ENCODE measurements at regions of chr3 and their contacts with region 1.

Region 1: DNA sequence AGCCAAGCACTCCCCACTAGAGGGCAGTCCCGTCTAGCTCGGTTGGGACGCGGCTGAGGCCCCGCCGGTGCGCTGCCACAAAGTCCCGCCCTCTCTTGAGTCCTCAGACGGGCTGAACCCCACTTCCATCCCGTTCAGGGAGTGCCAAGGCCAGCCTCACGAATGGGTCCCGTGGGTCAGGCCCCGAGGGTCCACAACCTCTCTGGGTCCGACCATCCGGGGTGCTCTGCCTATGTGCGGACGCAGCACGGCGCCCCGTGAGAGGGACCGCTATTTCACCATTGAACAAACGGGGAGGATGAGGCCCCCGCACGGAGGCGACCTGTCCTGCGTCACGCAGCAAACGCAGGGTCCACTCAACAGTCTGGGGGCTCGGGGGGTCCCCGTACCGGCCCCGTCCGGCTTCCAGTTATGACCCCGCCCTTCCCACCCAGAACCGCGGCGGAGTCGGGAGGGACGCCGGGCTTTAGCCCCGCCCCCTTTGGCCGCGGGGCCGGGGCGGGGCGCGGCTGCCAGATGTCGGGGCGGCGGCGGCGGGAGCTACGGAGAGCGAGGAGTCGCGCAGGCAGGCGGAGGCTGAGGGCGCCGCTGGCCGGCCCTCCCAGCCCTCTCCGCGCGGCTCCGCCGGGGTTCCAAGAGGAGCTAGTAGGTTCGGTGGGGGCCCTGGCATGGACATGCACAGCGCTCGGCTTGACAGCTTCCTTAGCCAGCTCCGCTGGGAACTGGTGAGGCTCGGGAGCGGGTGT is at the start of gene INKA1:
- DNase-seq: peak; percentile 94
- ATAC-seq: peak; percentile 63
- H3K4me3 ChIP-seq: peak within 1 kb of the TSS; percentile 73 to 99 (median 95)
- H3K4me3 Mint-ChIP-seq: peak within 1 kb of the TSS; percentile 86
- H3K27ac ChIP-seq: peak within 1 kb of the TSS; percentile 91 to 97
- H3K27ac Mint-ChIP-seq: peak within 1 kb of the TSS; percentile 98
- H3K4me1 ChIP-seq: peaks cover 42 to 47% of the 10 kb centered on the region in 2 donors
- H3K4me1 Mint-ChIP-seq: peaks cover 52% of the 10 kb centered on the region
- H3K27me3 ChIP-seq: peaks cover 0 to 3% (median 0%) of the 10 kb centered on the region in 4 experiments
- H3K27me3 Mint-ChIP-seq: peaks cover 5% of the 10 kb centered on the region
- CTCF ChIP-seq: peak; percentile 84
- total RNA-seq, gene INKA1: 25.8 and 28.2 TPM in 2 replicates

Region 2: GRCh38 chr3:49703443-49703927 is 99.4 kb before region 1 on chr3:
- CTCF ChIA-PET with region 1: interaction called, 7 read pairs
- POLR2A ChIA-PET with region 1: no interaction called
- intact Hi-C with region 1: loop called (anchors 1 kb)
- DNase-seq: peak; percentile 81
- ATAC-seq: peak; percentile 99
- H3K4me3 ChIP-seq: no peak overlapping the region
- H3K4me3 Mint-ChIP-seq: no peak overlapping the region
- H3K27ac ChIP-seq: no peak overlapping the region
- H3K27ac Mint-ChIP-seq: peak overlapping the region; percentile 59
- H3K4me1 ChIP-seq: no peaks in the 10 kb centered on the region
- H3K4me1 Mint-ChIP-seq: peaks cover 6% of the 10 kb centered on the region
- H3K27me3 ChIP-seq: no peaks in the 10 kb centered on the region
- H3K27me3 Mint-ChIP-seq: no peaks in the 10 kb centered on the region
- CTCF ChIP-seq: peak; percentile 87

Region 3: DNA sequence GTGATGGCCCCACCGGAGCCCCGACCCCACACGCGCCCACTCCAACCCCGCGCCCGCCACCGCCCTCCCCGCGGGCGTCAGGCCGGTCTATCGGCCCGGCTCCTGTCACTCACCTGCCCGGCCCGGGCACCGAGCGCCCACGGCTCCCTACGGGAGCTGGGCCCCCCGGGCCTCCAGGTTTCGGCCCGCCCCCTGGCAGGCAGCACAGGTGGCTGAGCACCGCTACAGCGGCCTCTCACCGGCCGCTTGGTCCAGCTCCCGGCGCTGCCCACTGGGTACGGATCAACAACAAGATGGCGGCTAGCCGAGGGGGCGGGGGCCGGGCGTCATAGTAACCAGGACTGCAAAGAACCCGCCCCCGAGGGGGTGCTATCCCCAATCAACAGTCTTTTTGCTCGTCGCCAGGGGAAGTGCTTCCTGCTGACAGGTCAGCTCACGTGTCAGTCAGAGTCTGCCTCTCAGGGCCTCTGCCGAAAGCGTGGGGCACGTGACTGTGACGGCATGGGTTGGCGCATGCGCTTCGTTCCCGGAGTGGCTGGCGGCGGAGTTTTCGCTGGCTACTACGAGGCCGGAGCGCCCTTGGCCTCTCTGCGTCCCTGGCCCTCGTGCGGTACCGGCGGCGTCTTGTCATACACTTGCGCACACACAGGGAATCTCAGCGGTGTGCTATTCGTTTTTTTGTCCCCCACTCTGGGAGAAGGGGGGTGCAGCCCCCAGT is 16.5 kb before region 1 on chr3 and contains the start of gene IP6K1:
- CTCF ChIA-PET with region 1: interaction called, 15 read pairs
- POLR2A ChIA-PET with region 1: interaction called, 13 read pairs
- intact Hi-C with region 1: loop called (anchors 1 kb)
- DNase-seq: peak; percentile 99
- ATAC-seq: peak; percentile 99
- H3K4me3 ChIP-seq: peak within 1 kb of the TSS; percentile 69 to 98 (median 88)
- H3K4me3 Mint-ChIP-seq: peak within 1 kb of the TSS; percentile 97
- H3K27ac ChIP-seq: peak within 1 kb of the TSS; percentile 94 to 95
- H3K27ac Mint-ChIP-seq: peak within 1 kb of the TSS; percentile 99
- H3K4me1 ChIP-seq: peaks cover 17 to 34% of the 10 kb centered on the region in 2 donors
- H3K4me1 Mint-ChIP-seq: peaks cover 26% of the 10 kb centered on the region
- H3K27me3 ChIP-seq: no peaks in the 10 kb centered on the region
- H3K27me3 Mint-ChIP-seq: no peaks in the 10 kb centered on the region
- CTCF ChIP-seq: no peak
- total RNA-seq, gene IP6K1: 73.1 and 77.8 TPM in 2 replicates

Region 4: GRCh38 chr3:49856181-49857005 is 53.5 kb after region 1 on chr3 and contains the start of gene TRAIP:
- CTCF ChIA-PET with region 1: interaction called, 3 read pairs
- POLR2A ChIA-PET with region 1: interaction called, 3 read pairs
- intact Hi-C with region 1: loop called (anchors 1 kb)
- DNase-seq: peak; percentile 98
- ATAC-seq: peak; percentile 100
- H3K4me3 ChIP-seq: peak within 1 kb of the TSS; percentile 53 to 91 (median 69)
- H3K4me3 Mint-ChIP-seq: peak within 1 kb of the TSS; percentile 91
- H3K27ac ChIP-seq: peak within 1 kb of the TSS; percentile 56 to 59
- H3K27ac Mint-ChIP-seq: peak within 1 kb of the TSS; percentile 90
- H3K4me1 ChIP-seq: peaks cover 10 to 15% of the 10 kb centered on the region in 2 donors
- H3K4me1 Mint-ChIP-seq: peaks cover 11% of the 10 kb centered on the region
- H3K27me3 ChIP-seq: peaks cover 0 to 3% (median 0%) of the 10 kb centered on the region in 4 experiments
- H3K27me3 Mint-ChIP-seq: no peaks in the 10 kb centered on the region
- CTCF ChIP-seq: no peak
- total RNA-seq, gene TRAIP: 8.7 and 9.9 TPM in 2 replicates

Region 5: GRCh38 chr3:49939858-49940666 is 137.2 kb after region 1 on chr3 and contains the start of gene RBM6:
- CTCF ChIA-PET with region 1: no interaction called
- POLR2A ChIA-PET with region 1: no interaction called
- intact Hi-C with region 1: loop called (anchors 2 kb)
- DNase-seq: peak; percentile 97
- ATAC-seq: peak; percentile 93
- H3K4me3 ChIP-seq: peak within 1 kb of the TSS; percentile 81 to 98 (median 90)
- H3K4me3 Mint-ChIP-seq: peak within 1 kb of the TSS; percentile 99
- H3K27ac ChIP-seq: peak within 1 kb of the TSS; percentile 89 to 95
- H3K27ac Mint-ChIP-seq: peak within 1 kb of the TSS; percentile 100
- H3K4me1 ChIP-seq: peaks cover 23 to 32% of the 10 kb centered on the region in 2 donors
- H3K4me1 Mint-ChIP-seq: peaks cover 36% of the 10 kb centered on the region
- H3K27me3 ChIP-seq: no peaks in the 10 kb centered on the region
- H3K27me3 Mint-ChIP-seq: no peaks in the 10 kb centered on the region
- CTCF ChIP-seq: no peak
- total RNA-seq, gene RBM6: 285 and 300 TPM in 2 replicates